Stomach (tissue), 19 donors: ENCODE measurements at regions of chr5 and their contacts with region 1.

Region 1: GRCh38 chr5:142012792-142013388 is at the start of gene GNPDA1:
- DNase-seq: peak; percentile 88 to 94
- H3K4me3 ChIP-seq: peak within 1 kb of the TSS; percentile 69 to 79 (median 72)
- H3K27ac ChIP-seq: peak within 1 kb of the TSS; percentile 72 to 92 (median 90)
- H3K4me1 ChIP-seq: peaks cover 12 to 47% (median 25%) of the 10 kb centered on the region in 4 donors
- H3K27me3 ChIP-seq: no peaks in the 10 kb centered on the region
- CTCF ChIP-seq: peak in 1 of 7 experiments; percentile 35
- EP300 ChIP-seq: no peak
- POLR2A ChIP-seq: no peak
- total RNA-seq, gene GNPDA1: 2.7 to 14.1 (median 5.8) TPM

Region 2: GRCh38 chr5:142145106-142145900 is 132.4 kb after region 1 on chr5:
- intact Hi-C with region 1: loop called (anchors 10 kb)
- DNase-seq: peak; percentile 66 to 89
- H3K4me3 ChIP-seq: no peak overlapping the region
- H3K27ac ChIP-seq: no peak overlapping the region
- H3K4me1 ChIP-seq: no peaks in the 10 kb centered on the region
- H3K27me3 ChIP-seq: no peaks in the 10 kb centered on the region
- CTCF ChIP-seq: peak in 5 of 7 experiments; percentile 41 to 62 (median 57)
- EP300 ChIP-seq: no peak
- POLR2A ChIP-seq: no peak